CD4-positive, alpha-beta memory T cell (primary cell): ENCODE measurements at regions of chr1 and their contacts with region 1.

Region 1: DNA sequence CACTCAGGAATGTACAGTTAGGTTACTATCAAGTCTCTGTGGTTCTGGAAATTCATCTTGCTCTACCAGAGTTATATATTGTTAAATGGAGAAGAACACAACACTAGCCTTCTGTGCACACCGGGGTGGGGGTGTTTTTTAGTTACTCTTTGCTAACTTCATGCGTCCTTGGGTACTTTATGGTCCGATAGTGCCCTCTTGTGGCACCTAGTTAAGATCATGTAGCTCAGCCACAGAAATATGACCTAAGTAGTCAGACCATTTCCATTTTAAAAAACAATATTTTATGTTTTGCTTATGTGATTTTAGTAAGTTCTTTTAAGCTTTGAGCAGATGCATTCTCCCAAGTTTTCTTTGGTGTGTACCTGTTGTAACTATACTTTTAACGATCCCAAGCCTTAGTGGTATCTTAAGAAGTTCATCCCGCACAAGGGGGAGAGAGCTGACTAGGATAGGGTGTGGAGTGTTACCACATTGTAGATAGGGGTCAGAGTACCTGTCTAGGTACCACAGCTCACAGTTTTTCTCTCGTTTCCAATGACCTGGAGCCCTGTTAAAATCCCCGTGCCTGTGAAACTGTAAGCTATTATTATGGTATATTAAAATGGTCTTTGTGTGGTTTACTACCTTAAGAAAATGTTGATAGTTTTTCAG is 20.6 kb upstream of the SH3D21 start:
- DNase-seq: peak; percentile 72 to 81 (median 75)
- H3K4me3 ChIP-seq: no peak overlapping the region
- H3K4me3 Mint-ChIP-seq: peak overlapping the region in 5 of 8 donors; percentile 5 to 41 (median 13)
- H3K27ac ChIP-seq: no peak overlapping the region
- H3K27ac Mint-ChIP-seq: peak overlapping the region; percentile 24 to 89 (median 76)
- H3K4me1 ChIP-seq: peaks cover 13% of the 10 kb centered on the region
- H3K4me1 Mint-ChIP-seq: peaks cover 8 to 29% (median 15%) of the 10 kb centered on the region in 4 donors
- H3K27me3 ChIP-seq: no peaks in the 10 kb centered on the region
- H3K27me3 Mint-ChIP-seq: no peaks in the 10 kb centered on the region

Region 2: GRCh38 chr1:35882945-35883634 is 402.5 kb before region 1 on chr1 and contains the start of gene AGO1:
- CTCF ChIA-PET with region 1: interaction called, 3 read pairs
- POLR2A ChIA-PET with region 1: no interaction called
- intact Hi-C with region 1: loop called (anchors 10 kb)
- DNase-seq: peak; percentile 94 to 97 (median 97)
- H3K4me3 ChIP-seq: peak within 1 kb of the TSS; percentile 73 to 89
- H3K4me3 Mint-ChIP-seq: peak within 1 kb of the TSS; percentile 92 to 97 (median 94)
- H3K27ac ChIP-seq: peak within 1 kb of the TSS; percentile 77
- H3K27ac Mint-ChIP-seq: peak within 1 kb of the TSS; percentile 57 to 94 (median 87)
- H3K4me1 ChIP-seq: peaks cover 40% of the 10 kb centered on the region
- H3K4me1 Mint-ChIP-seq: peaks cover 37 to 58% (median 46%) of the 10 kb centered on the region in 4 donors
- H3K27me3 ChIP-seq: no peaks in the 10 kb centered on the region
- H3K27me3 Mint-ChIP-seq: peaks cover 1 to 3% of the 10 kb centered on the region in 2 donors
- total RNA-seq, gene AGO1: 26.5 to 27.3 TPM

Region 3: DNA sequence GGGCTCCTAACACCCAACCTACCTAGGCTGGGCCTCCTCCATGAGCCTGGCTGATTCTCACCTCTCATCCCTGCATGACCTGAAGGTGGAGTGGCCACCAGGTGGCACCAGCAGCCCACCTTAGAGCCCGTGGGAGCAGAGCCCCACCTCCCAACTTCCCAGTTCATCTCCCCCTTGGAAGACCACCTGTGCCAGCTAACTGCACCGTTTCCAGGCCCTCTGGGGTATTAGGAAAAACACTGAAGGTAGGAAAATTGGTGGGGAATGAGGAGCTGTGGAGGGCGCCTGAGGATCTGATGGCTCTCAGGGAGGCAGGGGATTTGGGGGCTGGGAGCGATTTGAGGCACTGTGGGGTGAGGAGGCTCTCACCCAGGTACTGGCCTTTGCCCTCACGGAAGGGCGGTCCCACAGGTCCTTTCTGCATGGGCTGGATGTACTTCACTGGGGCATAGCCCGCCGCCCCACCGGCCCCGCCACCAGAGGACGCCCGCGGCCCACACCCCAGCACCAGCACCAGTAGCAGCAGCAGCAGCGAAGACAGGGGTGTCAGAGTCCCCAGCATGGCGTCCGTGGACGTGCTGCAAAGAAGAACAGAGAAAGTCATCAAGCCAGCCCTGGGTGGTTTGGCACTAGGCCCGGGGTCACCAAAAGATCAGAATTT is 185.8 kb before region 1 on chr1:
- CTCF ChIA-PET with region 1: interaction called, 17 read pairs
- POLR2A ChIA-PET with region 1: no interaction called
- intact Hi-C with region 1: loop called (anchors 1 kb)
- DNase-seq: peak; percentile 62 to 71 (median 70)
- H3K4me3 ChIP-seq: no peak overlapping the region
- H3K4me3 Mint-ChIP-seq: peak overlapping the region in 2 of 8 donors; percentile 26 to 39
- H3K27ac ChIP-seq: no peak overlapping the region
- H3K27ac Mint-ChIP-seq: peak overlapping the region in 1 of 7 donors; percentile 50
- H3K4me1 ChIP-seq: no peaks in the 10 kb centered on the region
- H3K4me1 Mint-ChIP-seq: peaks cover 0 to 4% (median under 1%) of the 10 kb centered on the region in 4 donors
- H3K27me3 ChIP-seq: no peaks in the 10 kb centered on the region
- H3K27me3 Mint-ChIP-seq: no peaks in the 10 kb centered on the region

Region 4: DNA sequence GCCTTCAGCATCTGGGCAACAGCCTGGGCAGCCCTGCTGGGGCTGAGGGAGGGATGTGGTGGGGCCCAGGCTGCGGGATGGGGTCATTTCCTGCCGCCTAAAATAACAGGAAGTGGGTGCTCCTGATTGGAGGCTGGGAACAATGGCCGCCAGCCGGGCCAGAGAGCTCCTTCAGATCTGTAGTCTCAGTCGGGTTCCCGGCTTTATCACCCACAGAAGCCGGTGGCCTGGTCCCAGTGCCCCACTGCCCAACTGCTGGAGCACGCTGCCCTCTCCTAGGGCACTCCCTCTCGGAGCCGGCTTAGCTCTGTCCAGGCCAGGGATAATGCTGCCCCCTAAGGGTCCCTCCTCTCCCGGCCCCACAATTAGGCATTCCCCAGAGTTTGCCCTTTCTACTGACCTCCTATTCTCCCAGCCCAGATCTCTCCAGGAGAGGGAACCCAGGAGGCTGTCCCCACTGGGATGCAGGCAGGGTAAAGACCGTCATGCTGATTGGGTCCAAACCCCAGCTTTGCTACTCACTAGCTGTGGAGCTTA is 124.6 kb before region 1 on chr1:
- CTCF ChIA-PET with region 1: interaction called, 14 read pairs
- POLR2A ChIA-PET with region 1: interaction called, 4 read pairs
- intact Hi-C with region 1: no loop called
- DNase-seq: peak; percentile 57 to 72 (median 67)
- H3K4me3 ChIP-seq: peak overlapping the region; percentile 53 to 62
- H3K4me3 Mint-ChIP-seq: peak overlapping the region; percentile 80 to 91 (median 86)
- H3K27ac ChIP-seq: peak overlapping the region; percentile 78
- H3K27ac Mint-ChIP-seq: peak overlapping the region; percentile 93 to 99 (median 98)
- H3K4me1 ChIP-seq: peaks cover 75% of the 10 kb centered on the region
- H3K4me1 Mint-ChIP-seq: peaks cover 53 to 83% (median 66%) of the 10 kb centered on the region in 4 donors
- H3K27me3 ChIP-seq: no peaks in the 10 kb centered on the region
- H3K27me3 Mint-ChIP-seq: no peaks in the 10 kb centered on the region

Region 5: DNA sequence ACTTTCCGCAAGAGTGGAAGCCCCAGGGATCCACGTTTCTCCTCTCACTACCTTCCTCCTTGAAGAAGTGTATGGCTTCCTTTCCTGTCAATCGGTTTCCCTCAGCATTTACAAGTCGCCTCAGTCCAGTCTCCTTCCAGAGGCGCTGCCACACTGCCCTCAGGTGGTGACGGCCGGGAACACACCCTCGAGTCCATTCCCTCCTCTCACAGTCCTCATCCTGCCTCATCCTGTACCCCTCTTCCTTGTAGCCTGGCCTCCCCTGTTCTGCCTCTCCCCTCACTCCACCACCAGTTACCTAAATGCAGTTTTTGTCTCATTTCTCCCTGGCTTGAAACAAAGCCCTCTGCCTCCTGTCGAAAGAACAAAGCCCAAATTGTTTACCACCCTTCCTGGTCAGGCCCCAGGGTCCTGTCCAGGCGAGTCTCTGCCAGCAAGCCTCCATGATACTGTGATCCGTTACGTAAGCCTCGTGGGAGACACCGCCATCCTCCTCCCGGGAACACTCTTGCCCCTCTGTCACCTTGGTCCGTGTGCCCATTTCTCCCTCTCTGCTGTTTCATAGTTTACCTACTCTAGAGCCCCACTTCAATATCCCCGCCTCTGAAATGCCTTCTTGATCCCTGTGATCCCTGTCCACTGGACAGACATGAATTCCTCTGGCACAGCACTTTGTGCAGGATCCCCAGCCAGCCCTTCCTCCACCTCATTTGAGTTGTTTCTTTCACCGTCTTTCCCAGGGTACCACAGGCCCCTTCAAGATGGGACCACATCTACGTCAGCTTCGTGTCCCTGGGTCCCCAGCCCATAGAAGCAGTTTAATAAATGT is 135.5 kb after region 1 on chr1:
- CTCF ChIA-PET with region 1: no interaction called
- POLR2A ChIA-PET with region 1: no interaction called
- intact Hi-C with region 1: loop called (anchors 1 kb)
- DNase-seq: peak; percentile 83 to 88 (median 86)
- H3K4me3 ChIP-seq: no peak overlapping the region
- H3K4me3 Mint-ChIP-seq: peak overlapping the region; percentile 49 to 84 (median 74)
- H3K27ac ChIP-seq: peak overlapping the region; percentile 30
- H3K27ac Mint-ChIP-seq: peak overlapping the region; percentile 82 to 97 (median 94)
- H3K4me1 ChIP-seq: peaks cover 21% of the 10 kb centered on the region
- H3K4me1 Mint-ChIP-seq: peaks cover 19 to 29% (median 22%) of the 10 kb centered on the region in 4 donors
- H3K27me3 ChIP-seq: no peaks in the 10 kb centered on the region
- H3K27me3 Mint-ChIP-seq: no peaks in the 10 kb centered on the region

Region 6: DNA sequence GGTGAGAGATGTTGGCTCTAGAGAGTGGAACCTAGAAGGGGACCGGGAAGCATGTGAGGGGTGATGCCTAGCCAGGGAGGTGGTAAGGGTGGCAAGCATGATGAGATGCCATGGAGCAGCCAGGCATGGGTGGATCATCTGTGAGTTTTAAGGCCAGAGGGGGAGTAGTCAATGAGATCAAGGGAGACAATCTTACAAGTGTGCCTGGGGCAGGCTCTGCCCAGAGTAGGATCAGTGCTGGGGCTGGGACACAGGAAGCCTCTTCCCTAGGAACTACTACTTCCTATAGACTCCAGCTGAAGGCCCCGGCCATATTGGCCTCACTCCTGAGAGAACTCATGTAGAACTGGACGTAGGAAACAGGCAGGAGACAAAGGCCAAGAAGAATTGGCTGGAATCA is 389.5 kb after region 1 on chr1:
- CTCF ChIA-PET with region 1: no interaction called
- POLR2A ChIA-PET with region 1: no interaction called
- intact Hi-C with region 1: no loop called
- DNase-seq: no peak
- H3K4me3 ChIP-seq: no peak overlapping the region
- H3K4me3 Mint-ChIP-seq: no peak overlapping the region
- H3K27ac ChIP-seq: no peak overlapping the region
- H3K27ac Mint-ChIP-seq: no peak overlapping the region
- H3K4me1 ChIP-seq: no peaks in the 10 kb centered on the region
- H3K4me1 Mint-ChIP-seq: no peaks in the 10 kb centered on the region
- H3K27me3 ChIP-seq: peaks cover 5% of the 10 kb centered on the region
- H3K27me3 Mint-ChIP-seq: peaks cover 6 to 22% of the 10 kb centered on the region in 2 donors